ENCODE measurements at regions of chr17 and their contacts with region 1.

Region 1: DNA sequence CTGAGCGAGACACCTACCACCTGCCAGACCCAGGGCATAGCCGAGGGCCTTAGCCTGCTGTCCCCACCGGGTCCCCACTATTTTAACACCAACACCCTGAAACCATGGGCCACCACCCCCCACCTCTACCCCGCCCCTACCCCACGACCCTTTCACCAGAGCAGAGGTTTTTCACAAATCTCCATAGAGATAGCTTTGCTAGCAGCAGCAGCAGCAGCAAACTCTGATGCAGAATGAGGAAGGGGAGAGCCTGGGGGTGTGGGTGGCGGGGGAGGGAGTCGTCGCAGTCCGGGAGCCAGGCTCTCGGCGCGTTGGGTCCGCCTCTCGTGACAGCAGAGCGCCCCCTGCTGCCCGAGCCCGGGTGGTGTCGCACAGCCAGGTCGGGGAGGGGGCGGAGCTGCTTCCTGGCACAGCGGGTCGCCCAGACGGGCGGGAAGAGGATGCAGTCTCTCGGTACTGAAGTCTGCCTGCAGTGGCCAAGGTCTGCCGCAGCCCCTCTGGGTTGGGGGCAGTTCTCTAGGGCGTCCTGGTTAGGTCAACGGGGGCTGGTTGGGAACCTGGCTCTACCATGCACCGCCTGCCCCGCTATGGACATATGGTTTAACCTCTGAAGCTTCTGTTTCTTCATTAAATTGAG is 38.1 kb upstream of the CCDC182 start:
- H3K4me3 ChIP-seq: no peak overlapping the region
- H3K27ac ChIP-seq: no peak overlapping the region; the same call in 1 of the 2 replicates
- H3K4me1 ChIP-seq: peaks cover 3% of the 10 kb centered on the region; the same call in 1 of the 2 replicates
- CTCF ChIP-seq: peak; percentile 94

Region 2: DNA sequence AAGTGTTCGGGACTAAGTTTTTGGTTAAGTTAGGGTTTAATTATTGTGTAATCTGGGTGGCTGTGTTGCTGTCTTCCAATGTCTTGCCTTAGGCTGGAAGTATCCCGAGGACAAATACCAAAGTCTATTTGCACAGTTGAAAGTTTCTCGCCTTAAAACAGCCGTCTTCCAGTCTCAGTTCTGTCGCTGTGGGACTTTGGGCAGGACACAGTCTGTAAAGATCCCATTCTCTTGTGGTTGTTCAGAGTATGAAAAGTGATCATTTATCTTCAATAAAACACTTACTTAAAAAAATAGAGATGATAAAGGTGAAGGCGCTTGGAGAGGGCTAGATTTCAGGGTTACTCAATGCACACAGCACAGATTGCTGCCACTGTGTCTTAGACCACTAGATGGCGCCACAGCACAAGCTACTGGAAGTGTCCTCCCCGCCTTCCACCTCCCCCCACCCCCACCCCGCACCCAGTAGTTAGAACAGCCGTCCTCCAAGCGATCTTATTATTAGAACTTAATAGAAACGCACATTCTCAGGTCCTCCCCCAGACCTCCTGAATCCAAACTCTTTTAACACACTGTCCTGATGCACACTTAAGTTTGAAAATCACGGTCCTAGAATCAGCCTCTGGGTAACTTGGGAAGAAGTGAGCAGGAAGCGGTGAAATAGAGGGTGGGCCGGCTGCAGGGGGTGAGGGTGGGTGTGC is 652.3 kb before region 1 on chr17:
- CTCF ChIA-PET with region 1: interaction called, 21 read pairs
- POLR2A ChIA-PET with region 1: no interaction called
- H3K4me3 ChIP-seq: peak overlapping the region; percentile 33
- H3K27ac ChIP-seq: no peak overlapping the region
- H3K4me1 ChIP-seq: no peaks in the 10 kb centered on the region; the same call in 1 of the 2 replicates
- CTCF ChIP-seq: peak; percentile 67

Region 3: GRCh38 chr17:57649731-57650484 is 133.3 kb before region 1 on chr17:
- CTCF ChIA-PET with region 1: no interaction called
- POLR2A ChIA-PET with region 1: no interaction called
- H3K4me3 ChIP-seq: no peak overlapping the region
- H3K27ac ChIP-seq: no peak overlapping the region
- H3K4me1 ChIP-seq: peaks cover 3% of the 10 kb centered on the region; the same call in 1 of the 2 replicates
- CTCF ChIP-seq: no peak

Region 4: DNA sequence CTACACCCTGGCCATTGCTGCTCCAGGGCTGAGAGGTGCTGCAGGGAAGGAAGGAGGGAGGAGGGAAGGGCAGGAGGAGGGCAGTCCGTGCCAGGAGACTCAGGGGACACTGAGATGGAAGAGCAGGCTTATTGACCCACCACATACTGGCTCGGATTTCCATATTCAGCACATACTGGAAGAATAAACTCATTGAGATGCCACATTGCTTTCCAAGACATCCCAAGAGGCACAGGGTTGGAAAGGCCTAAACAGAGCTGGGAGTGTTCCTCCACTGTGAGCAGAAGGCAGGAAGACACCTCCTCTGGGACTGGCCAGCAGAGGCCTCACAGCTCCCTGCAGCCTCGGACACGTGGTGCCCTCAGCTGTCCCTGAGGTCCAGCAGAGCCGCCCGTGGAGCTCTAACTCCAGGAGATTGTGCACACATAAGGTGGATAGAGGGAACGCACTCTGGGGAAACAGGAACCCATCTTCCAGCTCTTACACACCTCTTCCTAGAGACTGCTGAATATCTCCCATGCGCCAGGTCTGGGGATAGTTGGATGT is 55.5 kb before region 1 on chr17:
- CTCF ChIA-PET with region 1: interaction called, 13 read pairs
- POLR2A ChIA-PET with region 1: no interaction called
- H3K4me3 ChIP-seq: no peak overlapping the region
- H3K27ac ChIP-seq: no peak overlapping the region
- H3K4me1 ChIP-seq: no peaks in the 10 kb centered on the region
- CTCF ChIP-seq: no peak

Region 5: DNA sequence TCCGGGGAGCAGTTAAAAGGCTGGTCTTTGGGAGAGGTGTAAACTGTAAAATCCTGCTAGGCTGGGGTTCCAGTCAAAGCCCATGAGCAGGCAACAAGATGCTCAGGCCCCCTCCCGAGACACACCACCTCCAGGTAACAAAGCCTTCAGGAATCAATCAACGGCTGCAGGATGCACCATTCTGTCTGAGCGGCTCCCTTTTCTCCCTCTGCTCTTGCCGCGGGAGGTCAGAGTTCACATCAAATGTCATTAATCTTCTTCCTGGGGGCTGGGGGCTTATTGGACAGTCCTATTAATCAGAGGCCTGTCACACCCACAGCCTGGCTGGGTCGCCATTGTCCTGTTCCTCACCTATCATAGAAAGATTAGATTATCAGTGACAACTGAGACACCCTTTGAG is 26.3 kb before region 1 on chr17:
- CTCF ChIA-PET with region 1: interaction called, 11 read pairs
- POLR2A ChIA-PET with region 1: no interaction called
- H3K4me3 ChIP-seq: no peak overlapping the region
- H3K27ac ChIP-seq: no peak overlapping the region
- H3K4me1 ChIP-seq: no peaks in the 10 kb centered on the region
- CTCF ChIP-seq: no peak

Region 6: DNA sequence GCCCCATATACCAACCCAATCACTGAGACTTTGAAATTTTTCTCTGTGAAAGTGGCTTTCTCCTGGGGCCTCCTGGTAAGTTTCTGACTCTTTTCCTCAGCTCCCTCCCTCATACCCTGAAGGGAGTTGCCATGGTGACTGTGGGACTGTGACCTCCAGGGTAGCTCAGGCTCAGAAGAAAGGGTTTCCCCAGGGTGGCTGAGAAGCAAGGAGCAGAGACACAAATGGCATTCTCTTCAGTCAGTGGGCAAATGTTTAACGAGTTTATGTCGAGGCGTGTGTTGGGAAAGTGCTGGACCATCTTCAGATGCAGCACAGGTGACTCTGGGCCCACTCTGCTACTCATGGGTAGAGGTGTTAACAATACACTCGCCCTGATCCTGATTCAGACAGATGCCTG is 19.8 kb after region 1 on chr17:
- CTCF ChIA-PET with region 1: interaction called, 19 read pairs
- POLR2A ChIA-PET with region 1: no interaction called
- H3K4me3 ChIP-seq: no peak overlapping the region
- H3K27ac ChIP-seq: no peak overlapping the region
- H3K4me1 ChIP-seq: peaks cover 4% of the 10 kb centered on the region; the same call in 1 of the 2 replicates
- CTCF ChIP-seq: no peak

Region 7: GRCh38 chr17:57833179-57833939 is 50.1 kb after region 1 on chr17:
- CTCF ChIA-PET with region 1: interaction called, 45 read pairs
- POLR2A ChIA-PET with region 1: no interaction called
- H3K4me3 ChIP-seq: no peak overlapping the region
- H3K27ac ChIP-seq: peak overlapping the region; percentile 4; the same call in 1 of the 2 replicates
- H3K4me1 ChIP-seq: no peaks in the 10 kb centered on the region; the same call in 1 of the 2 replicates
- CTCF ChIP-seq: peak; percentile 92

Measured in HEK293 (cell line).